ENCODE measurements at regions of chr15 and their contacts with region 1.

Region 1: DNA sequence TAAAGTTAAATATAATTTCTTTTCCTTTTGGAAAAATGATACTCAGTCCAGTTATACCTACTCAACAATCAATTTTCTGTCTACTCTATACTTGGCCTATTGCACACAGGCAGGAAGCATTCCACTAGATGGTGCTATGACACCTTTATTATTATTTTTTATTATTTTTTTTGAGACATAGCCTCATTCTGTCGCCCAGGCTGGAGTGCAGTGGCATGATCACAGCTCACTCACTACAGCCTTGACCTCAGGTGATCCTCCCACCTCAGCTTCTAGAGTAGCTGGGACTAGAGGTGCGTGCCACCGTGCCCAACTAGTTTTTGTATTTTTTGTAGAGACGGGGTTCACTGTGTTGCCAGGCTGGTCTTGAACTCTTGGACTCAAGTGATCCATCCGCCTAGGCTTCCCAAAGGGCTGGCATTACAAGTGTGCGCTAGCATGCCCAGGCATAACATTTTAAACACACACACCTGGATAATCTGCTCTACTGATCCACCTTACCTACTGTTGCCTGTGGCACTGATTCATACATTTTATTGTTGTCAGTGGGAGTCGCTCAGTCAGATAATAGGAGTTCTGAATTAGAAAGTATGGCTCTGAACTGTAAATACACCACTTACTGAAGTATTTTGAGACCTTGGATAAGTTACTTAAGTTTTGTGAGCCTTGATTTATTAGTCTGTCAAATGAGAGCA is 56.2 kb downstream of the EIF3J start:
- DNase-seq: no peak
- ATAC-seq: peak in 1 of 8 donors; percentile 37
- H3K4me3 ChIP-seq: no peak overlapping the region
- H3K27ac ChIP-seq: no peak overlapping the region
- H3K4me1 ChIP-seq: peaks cover 0 to 4% (median 0%) of the 10 kb centered on the region in 9 donors
- H3K27me3 ChIP-seq: no peaks in the 10 kb centered on the region
- CTCF ChIP-seq: peak in 7 of 9 donors; percentile 23 to 53 (median 46)

Region 2: GRCh38 chr15:44788748-44789147 is 195.6 kb after region 1 on chr15:
- intact Hi-C with region 1: loop called in 1 of 10 experiments (anchors 5 kb)
- DNase-seq: no peak
- ATAC-seq: no peak
- H3K4me3 ChIP-seq: no peak overlapping the region
- H3K27ac ChIP-seq: no peak overlapping the region
- H3K4me1 ChIP-seq: peaks cover 0 to 13% (median 0%) of the 10 kb centered on the region in 9 donors
- H3K27me3 ChIP-seq: peaks cover 0 to 3% (median 0%) of the 10 kb centered on the region in 7 donors
- CTCF ChIP-seq: no peak

Measured in heart right ventricle (tissue), 16 donors.